MCF 10A (cell line): ENCODE measurements at regions of chr22 and their contacts with region 1.

Region 1: DNA sequence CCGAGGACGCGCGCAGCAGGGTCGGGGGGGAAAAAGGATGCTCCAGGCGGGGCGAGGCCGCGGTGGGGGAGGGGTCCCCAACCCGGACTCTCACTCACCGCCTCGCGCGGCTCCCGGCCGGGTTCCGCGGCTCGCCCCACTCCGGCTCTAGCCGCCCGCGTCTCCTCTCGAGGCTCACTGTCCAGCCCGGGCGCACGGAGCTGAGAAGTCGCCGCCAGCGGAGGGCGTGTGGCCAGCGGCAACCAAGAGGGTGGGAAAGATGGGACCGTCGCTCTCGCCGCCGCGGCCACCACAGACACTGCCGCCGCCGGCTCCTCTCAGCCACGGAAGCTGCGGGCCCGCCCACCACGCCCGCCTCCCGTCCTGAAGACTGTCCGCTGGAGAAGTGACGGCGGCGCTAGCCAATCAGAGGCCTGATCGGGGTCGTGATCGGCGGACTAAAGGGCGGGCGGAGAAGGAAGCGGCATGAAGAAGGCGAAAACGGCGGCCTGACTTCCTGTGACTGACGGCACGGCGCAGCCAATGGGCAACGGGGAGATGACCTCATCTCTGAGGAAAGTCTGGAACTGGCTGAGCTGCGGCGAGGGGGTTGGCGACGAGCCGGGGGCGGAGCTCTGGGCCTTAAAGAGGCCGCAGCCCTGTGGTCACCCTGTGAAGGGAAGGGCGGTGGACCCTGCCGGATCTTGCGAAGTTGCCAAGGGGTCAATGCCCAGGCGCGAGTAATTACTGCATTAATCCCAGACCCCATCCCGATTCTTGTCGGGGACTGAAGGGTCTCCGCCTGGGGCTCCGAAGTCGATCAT is at the start of gene MRTFA:
- DNase-seq: peak; percentile 99
- H3K4me3 Mint-ChIP-seq: peak within 1 kb of the TSS; percentile 88
- H3K27ac Mint-ChIP-seq: peak within 1 kb of the TSS; percentile 94
- H3K4me1 Mint-ChIP-seq: peaks cover 28% of the 10 kb centered on the region
- H3K27me3 Mint-ChIP-seq: no peaks in the 10 kb centered on the region
- CTCF ChIP-seq: no peak
- total RNA-seq, gene MRTFA: 47.2 and 52.7 TPM in 2 replicates

Region 2: DNA sequence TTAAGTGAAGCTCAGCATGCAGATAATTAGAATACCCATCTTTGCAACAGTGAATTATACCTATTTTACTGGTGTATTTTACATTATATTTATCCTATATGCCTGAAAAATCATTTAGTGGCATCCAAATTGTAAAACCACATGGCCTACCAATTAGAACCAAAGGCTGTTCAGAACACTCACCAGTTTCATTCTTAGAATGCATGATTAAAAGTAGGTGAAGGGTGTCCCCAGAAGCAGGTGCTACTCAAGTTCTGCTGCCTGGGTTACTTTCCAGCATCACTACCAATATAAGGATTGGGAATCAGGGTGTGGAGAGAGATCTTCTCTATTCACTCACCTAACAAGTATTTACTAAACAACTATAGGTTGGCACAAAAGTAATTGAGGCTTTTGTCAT is 162.9 kb before region 1 on chr22:
- CTCF ChIA-PET with region 1: no interaction called
- POLR2A ChIA-PET with region 1: no interaction called
- intact Hi-C with region 1: no loop called
- DNase-seq: no peak
- H3K4me3 Mint-ChIP-seq: no peak overlapping the region
- H3K27ac Mint-ChIP-seq: no peak overlapping the region
- H3K4me1 Mint-ChIP-seq: peaks cover 19% of the 10 kb centered on the region
- H3K27me3 Mint-ChIP-seq: no peaks in the 10 kb centered on the region
- CTCF ChIP-seq: no peak

Region 3: DNA sequence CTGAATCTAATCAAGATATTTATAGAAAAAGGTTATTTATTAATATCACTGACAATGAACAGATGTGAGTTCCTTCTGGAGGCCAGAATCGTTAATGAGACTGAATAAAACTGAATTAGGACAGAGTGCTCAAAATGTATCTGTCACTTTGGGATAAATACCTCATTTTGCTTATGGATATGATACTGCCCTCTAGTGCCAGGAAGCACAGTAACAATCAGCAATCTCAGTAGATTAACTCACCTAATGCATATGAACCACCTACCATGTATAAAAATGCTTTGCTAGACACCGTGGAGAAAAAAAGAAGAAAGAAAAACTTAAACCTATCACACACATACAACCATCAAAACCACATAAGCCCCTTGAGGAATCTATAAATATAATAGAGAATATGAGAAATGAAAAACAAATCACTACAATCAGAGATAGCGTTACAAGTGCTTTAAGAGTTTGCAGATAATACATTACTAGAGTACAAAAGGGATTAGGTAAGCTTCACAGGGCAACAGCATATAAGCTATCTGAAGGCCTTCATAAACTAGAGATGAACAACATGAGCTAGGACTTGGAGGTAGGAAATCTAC is 148.8 kb before region 1 on chr22:
- CTCF ChIA-PET with region 1: interaction called, 7 read pairs
- POLR2A ChIA-PET with region 1: interaction called, 27 read pairs
- intact Hi-C with region 1: no loop called
- DNase-seq: peak; percentile 54
- H3K4me3 Mint-ChIP-seq: no peak overlapping the region
- H3K27ac Mint-ChIP-seq: peak overlapping the region; percentile 94
- H3K4me1 Mint-ChIP-seq: peaks cover 39% of the 10 kb centered on the region
- H3K27me3 Mint-ChIP-seq: no peaks in the 10 kb centered on the region
- CTCF ChIP-seq: peak; percentile 55

Region 4: DNA sequence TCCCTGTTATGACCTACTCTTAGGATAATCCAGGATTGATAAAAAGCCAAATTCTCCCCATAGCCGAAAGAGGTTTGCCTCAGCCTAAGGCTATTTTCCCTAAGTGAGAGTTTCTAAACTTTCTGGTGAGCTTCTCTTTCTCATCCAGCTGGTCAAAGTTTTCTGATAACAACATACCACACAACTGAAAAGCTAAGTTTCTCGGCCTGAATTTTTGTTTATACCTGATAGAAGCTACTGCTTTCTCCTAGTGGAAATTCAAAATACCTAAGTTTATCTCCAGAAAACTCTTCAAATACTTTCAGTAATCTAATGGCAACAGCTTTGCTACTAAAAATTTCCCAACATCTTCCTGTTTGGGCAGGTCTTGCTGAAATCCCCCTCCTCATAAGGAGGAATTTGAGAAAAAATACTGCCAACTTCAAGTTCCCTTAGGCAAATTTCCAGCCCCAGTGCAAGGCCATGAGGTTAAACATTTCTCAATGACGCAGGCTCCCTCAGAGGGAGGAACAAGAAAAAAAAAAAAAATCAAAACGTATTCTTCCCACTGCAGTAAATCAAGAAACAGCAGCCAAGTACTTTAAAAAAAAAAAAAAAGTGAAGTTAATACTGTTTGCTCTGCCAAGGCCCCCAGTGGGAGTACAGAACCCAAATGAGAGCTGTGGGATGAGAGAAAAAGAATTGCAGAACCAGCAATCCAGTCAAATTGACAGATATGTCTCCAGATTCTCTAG is 127.0 kb before region 1 on chr22:
- CTCF ChIA-PET with region 1: interaction called, 3 read pairs
- POLR2A ChIA-PET with region 1: interaction called, 55 read pairs
- intact Hi-C with region 1: no loop called
- DNase-seq: peak; percentile 97
- H3K4me3 Mint-ChIP-seq: peak overlapping the region; percentile 31
- H3K27ac Mint-ChIP-seq: peak overlapping the region; percentile 85
- H3K4me1 Mint-ChIP-seq: peaks cover 44% of the 10 kb centered on the region
- H3K27me3 Mint-ChIP-seq: no peaks in the 10 kb centered on the region
- CTCF ChIP-seq: no peak

Region 5: GRCh38 chr22:40541300-40541699 is 95.3 kb before region 1 on chr22:
- CTCF ChIA-PET with region 1: no interaction called
- POLR2A ChIA-PET with region 1: interaction called, 19 read pairs
- intact Hi-C with region 1: no loop called
- DNase-seq: peak; percentile 91
- H3K4me3 Mint-ChIP-seq: peak overlapping the region; percentile 36
- H3K27ac Mint-ChIP-seq: peak overlapping the region; percentile 89
- H3K4me1 Mint-ChIP-seq: peaks cover 31% of the 10 kb centered on the region
- H3K27me3 Mint-ChIP-seq: no peaks in the 10 kb centered on the region
- CTCF ChIP-seq: no peak

Region 6: GRCh38 chr22:40597526-40598430 is 38.8 kb before region 1 on chr22:
- CTCF ChIA-PET with region 1: no interaction called
- POLR2A ChIA-PET with region 1: interaction called, 38 read pairs
- intact Hi-C with region 1: no loop called
- DNase-seq: no peak
- H3K4me3 Mint-ChIP-seq: peak overlapping the region; percentile 45
- H3K27ac Mint-ChIP-seq: peak overlapping the region; percentile 35
- H3K4me1 Mint-ChIP-seq: peaks cover 41% of the 10 kb centered on the region
- H3K27me3 Mint-ChIP-seq: no peaks in the 10 kb centered on the region
- CTCF ChIP-seq: no peak

Region 7: GRCh38 chr22:40782518-40782917 is 145.9 kb after region 1 on chr22:
- CTCF ChIA-PET with region 1: no interaction called
- POLR2A ChIA-PET with region 1: no interaction called
- intact Hi-C with region 1: no loop called
- DNase-seq: no peak
- H3K4me3 Mint-ChIP-seq: no peak overlapping the region
- H3K27ac Mint-ChIP-seq: peak overlapping the region; percentile 28
- H3K4me1 Mint-ChIP-seq: no peaks in the 10 kb centered on the region
- H3K27me3 Mint-ChIP-seq: no peaks in the 10 kb centered on the region
- CTCF ChIP-seq: no peak